ENCODE measurements at regions of chr13 and their contacts with region 1.

Region 1: DNA sequence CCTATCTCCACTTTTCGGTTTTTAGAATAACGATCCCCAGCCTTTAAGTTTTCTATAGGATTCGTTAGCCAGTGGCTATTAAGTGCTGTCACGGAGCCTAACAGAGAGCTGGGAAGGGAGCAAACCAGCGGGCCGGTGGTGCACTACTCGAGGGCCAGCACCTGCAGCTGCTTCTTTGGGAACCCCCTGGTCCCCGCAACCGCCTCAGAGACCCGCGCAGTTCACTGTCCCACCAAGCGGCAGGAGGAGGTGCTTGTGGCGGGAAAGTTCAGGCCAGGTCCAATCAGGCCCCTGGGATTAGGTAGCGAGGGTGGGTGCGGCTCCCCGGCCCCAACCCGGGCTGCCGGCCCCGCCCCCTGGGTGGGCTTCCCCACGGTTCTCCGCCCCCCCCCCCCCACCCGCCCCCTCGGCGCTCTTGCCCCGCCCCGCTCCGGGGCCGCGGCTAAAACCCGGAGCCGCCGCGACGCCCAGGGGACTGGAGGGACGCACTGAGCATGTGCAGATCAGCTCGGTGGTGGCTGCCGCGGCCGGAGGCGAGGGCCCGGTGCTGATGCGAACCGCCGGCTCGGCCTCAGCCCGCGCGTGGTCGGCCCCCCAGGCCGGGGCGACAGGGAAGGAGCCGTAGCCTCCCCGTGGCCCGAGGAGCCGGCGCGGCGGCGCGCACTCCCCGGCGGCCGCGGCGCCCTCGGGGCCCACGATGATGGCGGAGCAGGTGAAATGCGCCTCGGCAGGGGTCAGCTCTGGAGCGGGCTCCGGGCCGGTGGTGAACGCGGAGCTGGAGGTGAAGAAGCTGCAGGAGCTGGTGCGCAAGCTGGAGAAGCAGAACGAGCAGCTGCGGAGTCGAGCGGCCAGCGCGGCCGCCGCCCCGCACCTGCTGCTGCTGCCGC is at the start of gene SLAIN1:
- DNase-seq: peak; percentile 15
- ATAC-seq: peak; percentile 83
- H3K4me3 ChIP-seq: peak within 1 kb of the TSS; percentile 58 to 76 (median 62)
- H3K27ac ChIP-seq: no peak within 1 kb of the TSS
- H3K4me1 ChIP-seq: peaks cover 10% of the 10 kb centered on the region
- H3K27me3 ChIP-seq: peaks cover 3 to 21% of the 10 kb centered on the region in 2 experiments; a peak in 3 of 5 replicates
- CTCF ChIP-seq: no peak
- EP300 ChIP-seq: no peak
- POLR2A ChIP-seq: no peak
- RAD21 ChIP-seq: no peak
- total RNA-seq, gene SLAIN1: 4.5 and 4.8 TPM in 2 replicates

Region 2: GRCh38 chr13:77329133-77329910 is 368.1 kb before region 1 on chr13:
- CTCF ChIA-PET with region 1: no interaction called
- POLR2A ChIA-PET with region 1: no interaction called
- in situ Hi-C with region 1: no loop called
- intact Hi-C with region 1: loop called (anchors 5 kb)
- DNase-seq: peak; percentile 85
- ATAC-seq: peak; percentile 77
- H3K4me3 ChIP-seq: peak overlapping the region; percentile 62 to 78 (median 76)
- H3K27ac ChIP-seq: peak overlapping the region; percentile 56
- H3K4me1 ChIP-seq: peaks cover 33% of the 10 kb centered on the region
- H3K27me3 ChIP-seq: peaks cover 0 to 4% of the 10 kb centered on the region in 2 experiments; a peak in 1 of 5 replicates
- CTCF ChIP-seq: no peak; the same call in 1 of the 2 replicates
- EP300 ChIP-seq: no peak; a peak in 1 of 4 replicates
- POLR2A ChIP-seq: peak; percentile 55 to 77
- RAD21 ChIP-seq: no peak

Region 3: GRCh38 chr13:77595166-77595810 is 102.2 kb before region 1 on chr13:
- CTCF ChIA-PET with region 1: no interaction called
- POLR2A ChIA-PET with region 1: no interaction called
- in situ Hi-C with region 1: no loop called
- intact Hi-C with region 1: no loop called
- DNase-seq: no peak
- ATAC-seq: no peak
- H3K4me3 ChIP-seq: no peak overlapping the region
- H3K27ac ChIP-seq: no peak overlapping the region
- H3K4me1 ChIP-seq: no peaks in the 10 kb centered on the region
- H3K27me3 ChIP-seq: no peaks in the 10 kb centered on the region
- CTCF ChIP-seq: no peak
- EP300 ChIP-seq: no peak
- POLR2A ChIP-seq: no peak
- RAD21 ChIP-seq: no peak

Measured in HepG2 (cell line).